ENCODE measurements at regions of chr1 and their contacts with region 1.

Region 1: GRCh38 chr1:170929835-170930554 is 5.3 kb upstream of the MROH9 start:
- DNase-seq: peak; percentile 45
- ATAC-seq: peak; percentile 41
- H3K4me3 ChIP-seq: no peak overlapping the region
- H3K4me3 Mint-ChIP-seq: no peak overlapping the region
- H3K27ac ChIP-seq: no peak overlapping the region
- H3K27ac Mint-ChIP-seq: no peak overlapping the region
- H3K4me1 ChIP-seq: no peaks in the 10 kb centered on the region
- H3K4me1 Mint-ChIP-seq: no peaks in the 10 kb centered on the region
- H3K27me3 ChIP-seq: no peaks in the 10 kb centered on the region
- H3K27me3 Mint-ChIP-seq: no peaks in the 10 kb centered on the region
- CTCF ChIP-seq: peak; percentile 82

Region 2: DNA sequence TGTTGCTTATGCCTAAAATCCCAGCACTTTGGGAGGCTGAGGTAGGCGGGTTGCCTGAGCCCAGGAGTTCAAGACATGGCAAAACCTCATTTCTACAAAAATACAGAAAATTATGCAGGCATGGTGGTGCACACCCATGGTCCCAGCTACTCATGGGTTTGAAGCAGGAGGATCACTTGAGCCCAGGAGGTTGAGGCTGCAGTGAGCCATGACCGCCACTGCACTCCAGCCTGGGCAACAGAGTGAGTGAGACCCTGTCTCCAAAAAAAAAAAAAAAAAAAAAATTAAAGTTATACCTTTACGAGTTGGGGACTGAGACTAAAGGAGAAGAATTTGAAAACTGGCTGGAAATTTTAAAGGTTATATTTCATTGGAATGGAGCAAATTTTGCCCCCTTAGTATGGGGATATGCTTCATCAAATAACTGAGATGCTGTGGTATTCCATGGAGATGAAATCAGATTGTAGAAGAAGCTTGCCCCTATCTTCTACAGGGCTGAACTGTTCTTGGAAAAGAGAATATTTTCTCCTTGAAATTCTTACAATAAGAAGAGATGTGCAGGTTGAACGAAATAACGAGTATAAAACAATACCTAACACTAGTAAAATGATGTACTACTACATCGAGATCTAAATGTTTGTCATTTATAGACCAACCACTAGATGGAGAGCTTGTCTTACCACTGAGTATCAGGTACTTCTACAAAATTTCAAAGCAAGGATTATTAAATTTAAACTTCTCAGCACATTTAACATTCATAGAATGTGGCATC is 1001.4 kb before region 1 on chr1:
- CTCF ChIA-PET with region 1: interaction called, 40 read pairs
- POLR2A ChIA-PET with region 1: no interaction called
- intact Hi-C with region 1: no loop called
- DNase-seq: peak; percentile 58
- ATAC-seq: peak; percentile 56
- H3K4me3 ChIP-seq: no peak overlapping the region
- H3K4me3 Mint-ChIP-seq: no peak overlapping the region
- H3K27ac ChIP-seq: no peak overlapping the region
- H3K27ac Mint-ChIP-seq: no peak overlapping the region
- H3K4me1 ChIP-seq: no peaks in the 10 kb centered on the region
- H3K4me1 Mint-ChIP-seq: no peaks in the 10 kb centered on the region
- H3K27me3 ChIP-seq: no peaks in the 10 kb centered on the region
- H3K27me3 Mint-ChIP-seq: no peaks in the 10 kb centered on the region
- CTCF ChIP-seq: peak; percentile 92

Region 3: GRCh38 chr1:170978371-170978910 is 48.4 kb after region 1 on chr1:
- CTCF ChIA-PET with region 1: no interaction called
- POLR2A ChIA-PET with region 1: no interaction called
- intact Hi-C with region 1: no loop called
- DNase-seq: no peak
- ATAC-seq: no peak
- H3K4me3 ChIP-seq: no peak overlapping the region
- H3K4me3 Mint-ChIP-seq: no peak overlapping the region
- H3K27ac ChIP-seq: no peak overlapping the region
- H3K27ac Mint-ChIP-seq: no peak overlapping the region
- H3K4me1 ChIP-seq: no peaks in the 10 kb centered on the region
- H3K4me1 Mint-ChIP-seq: no peaks in the 10 kb centered on the region
- H3K27me3 ChIP-seq: no peaks in the 10 kb centered on the region
- H3K27me3 Mint-ChIP-seq: no peaks in the 10 kb centered on the region
- CTCF ChIP-seq: no peak

Region 4: GRCh38 chr1:171081314-171081753 is 151.3 kb after region 1 on chr1:
- CTCF ChIA-PET with region 1: no interaction called
- POLR2A ChIA-PET with region 1: no interaction called
- intact Hi-C with region 1: no loop called
- DNase-seq: no peak
- ATAC-seq: no peak
- H3K4me3 ChIP-seq: no peak overlapping the region
- H3K4me3 Mint-ChIP-seq: no peak overlapping the region
- H3K27ac ChIP-seq: no peak overlapping the region
- H3K27ac Mint-ChIP-seq: no peak overlapping the region
- H3K4me1 ChIP-seq: no peaks in the 10 kb centered on the region
- H3K4me1 Mint-ChIP-seq: no peaks in the 10 kb centered on the region
- H3K27me3 ChIP-seq: no peaks in the 10 kb centered on the region
- H3K27me3 Mint-ChIP-seq: peaks cover 3% of the 10 kb centered on the region
- CTCF ChIP-seq: no peak

Measured in B cell (primary cell).